Heart left ventricle (tissue), 16 donors: ENCODE measurements at regions of chr16 and their contacts with region 1.

Region 1: DNA sequence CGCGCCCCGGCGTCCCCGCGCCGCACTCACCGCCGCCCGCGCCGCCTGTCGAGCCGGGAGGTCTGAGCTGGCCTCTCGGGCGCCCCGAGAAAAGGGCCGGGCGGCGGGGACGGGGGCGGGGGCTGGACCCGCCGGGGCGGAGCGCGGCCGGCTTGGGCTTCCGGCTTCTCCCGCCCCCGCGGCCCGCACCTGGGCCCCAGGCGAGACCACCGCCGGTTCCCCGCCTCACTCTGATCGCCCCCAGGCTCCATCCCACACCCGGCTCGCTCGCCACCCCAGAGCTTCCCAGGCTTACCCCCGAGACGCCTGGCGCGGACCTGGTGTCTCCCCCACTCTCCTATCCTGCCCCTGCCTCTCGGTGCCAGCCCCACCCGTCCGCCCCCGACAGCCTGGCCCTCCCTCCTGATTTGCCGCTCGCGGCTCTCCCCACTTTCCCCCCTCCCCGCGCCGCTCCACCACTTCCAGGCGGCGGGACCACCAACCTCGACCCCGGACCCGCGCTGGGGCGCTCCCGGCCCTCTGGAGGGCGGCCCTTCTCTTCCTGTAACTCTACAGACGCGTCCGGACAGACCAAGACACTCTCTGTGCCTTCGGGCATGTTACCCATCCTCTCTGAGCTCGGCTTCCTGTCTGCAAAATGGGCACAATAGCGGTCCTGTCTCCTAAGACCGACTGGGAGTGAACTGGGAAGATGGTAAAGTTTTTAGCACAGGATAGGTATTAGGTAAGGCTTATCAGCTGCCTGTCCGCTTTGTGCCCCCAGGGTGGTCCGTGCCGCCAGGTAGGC is at the start of gene LITAF:
- DNase-seq: peak; percentile 73 to 87 (median 77)
- ATAC-seq: peak; percentile 28 to 90 (median 82)
- H3K4me3 ChIP-seq: peak within 1 kb of the TSS; percentile 58 to 98 (median 84)
- H3K27ac ChIP-seq: peak within 1 kb of the TSS; percentile 81 to 98 (median 92)
- H3K4me1 ChIP-seq: peaks cover 0 to 52% (median 19%) of the 10 kb centered on the region in 12 donors
- H3K27me3 ChIP-seq: no peaks in the 10 kb centered on the region
- CTCF ChIP-seq: peak in 3 of 12 donors; percentile 5 to 15 (median 7)
- POLR2A ChIP-seq: peak in 1 of 2 donors; percentile 73
- total RNA-seq, gene LITAF: 34.1 to 133 (median 54.0) TPM

Region 2: DNA sequence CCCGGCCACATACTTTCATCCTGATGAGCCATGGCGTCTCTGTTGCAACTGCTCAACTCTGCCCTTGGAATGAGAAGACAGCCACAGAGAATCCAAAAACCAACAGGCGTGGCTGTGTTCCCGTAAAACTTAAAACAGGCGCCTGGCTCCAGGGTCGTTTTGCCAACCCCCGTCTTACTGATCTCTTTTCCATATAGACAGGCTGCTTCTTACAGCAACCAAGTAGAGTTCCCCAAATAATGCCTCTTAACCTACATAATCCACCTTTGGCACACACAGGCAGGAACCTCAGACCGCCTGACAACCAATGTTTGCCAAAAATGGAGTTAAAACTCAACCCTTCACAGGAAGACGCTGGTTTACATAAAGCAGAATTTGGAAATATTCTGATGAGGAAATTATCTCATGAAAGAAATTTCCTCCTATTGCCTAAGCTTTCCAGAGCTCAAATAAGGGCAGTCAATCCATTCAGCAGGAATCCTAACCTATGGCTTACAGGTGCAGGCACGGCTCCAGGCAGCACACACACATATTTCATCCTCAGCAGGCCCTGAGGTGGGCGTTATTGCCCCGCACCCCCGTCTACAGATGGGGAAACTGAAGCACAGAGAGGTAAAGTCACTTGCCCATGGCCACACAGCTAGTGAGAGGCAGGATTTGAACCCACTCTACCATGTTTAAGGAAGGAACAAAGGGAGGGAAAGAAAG is 36.1 kb before region 1 on chr16:
- intact Hi-C with region 1: loop called in 1 of 10 experiments (anchors 5 kb)
- DNase-seq: no peak
- ATAC-seq: peak in 1 of 4 donors; percentile 33
- H3K4me3 ChIP-seq: no peak overlapping the region
- H3K27ac ChIP-seq: peak overlapping the region in 3 of 12 donors; percentile 30 to 54 (median 51)
- H3K4me1 ChIP-seq: peaks cover 0 to 25% (median 4%) of the 10 kb centered on the region in 12 donors
- H3K27me3 ChIP-seq: no peaks in the 10 kb centered on the region
- CTCF ChIP-seq: no peak
- POLR2A ChIP-seq: no peak

Region 3: DNA sequence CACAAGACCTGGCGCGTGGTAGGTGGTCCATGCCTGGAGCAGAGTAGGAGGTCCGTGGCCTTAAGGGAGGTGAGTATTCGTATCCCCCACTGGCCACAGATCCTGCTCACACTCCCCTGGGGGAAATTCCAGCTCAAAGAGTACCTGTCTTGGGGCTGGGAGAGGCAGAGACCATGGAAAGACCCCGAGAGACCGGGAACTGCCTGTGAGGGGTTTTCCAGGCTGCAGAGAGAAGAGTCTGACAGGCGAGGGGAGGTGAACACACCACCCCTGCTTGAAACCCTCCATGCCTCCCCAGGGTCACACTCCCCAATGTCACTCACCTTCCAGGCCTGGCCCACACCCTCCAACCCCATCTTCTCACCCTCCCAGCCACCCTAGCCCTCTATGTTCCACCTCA is 68.6 kb after region 1 on chr16:
- intact Hi-C with region 1: no loop called
- DNase-seq: no peak
- ATAC-seq: no peak
- H3K4me3 ChIP-seq: no peak overlapping the region
- H3K27ac ChIP-seq: no peak overlapping the region
- H3K4me1 ChIP-seq: peaks cover 0 to 12% (median 5%) of the 10 kb centered on the region in 12 donors
- H3K27me3 ChIP-seq: no peaks in the 10 kb centered on the region
- CTCF ChIP-seq: no peak
- POLR2A ChIP-seq: no peak